ENCODE measurements at regions of chr11 and their contacts with region 1.

Region 1: DNA sequence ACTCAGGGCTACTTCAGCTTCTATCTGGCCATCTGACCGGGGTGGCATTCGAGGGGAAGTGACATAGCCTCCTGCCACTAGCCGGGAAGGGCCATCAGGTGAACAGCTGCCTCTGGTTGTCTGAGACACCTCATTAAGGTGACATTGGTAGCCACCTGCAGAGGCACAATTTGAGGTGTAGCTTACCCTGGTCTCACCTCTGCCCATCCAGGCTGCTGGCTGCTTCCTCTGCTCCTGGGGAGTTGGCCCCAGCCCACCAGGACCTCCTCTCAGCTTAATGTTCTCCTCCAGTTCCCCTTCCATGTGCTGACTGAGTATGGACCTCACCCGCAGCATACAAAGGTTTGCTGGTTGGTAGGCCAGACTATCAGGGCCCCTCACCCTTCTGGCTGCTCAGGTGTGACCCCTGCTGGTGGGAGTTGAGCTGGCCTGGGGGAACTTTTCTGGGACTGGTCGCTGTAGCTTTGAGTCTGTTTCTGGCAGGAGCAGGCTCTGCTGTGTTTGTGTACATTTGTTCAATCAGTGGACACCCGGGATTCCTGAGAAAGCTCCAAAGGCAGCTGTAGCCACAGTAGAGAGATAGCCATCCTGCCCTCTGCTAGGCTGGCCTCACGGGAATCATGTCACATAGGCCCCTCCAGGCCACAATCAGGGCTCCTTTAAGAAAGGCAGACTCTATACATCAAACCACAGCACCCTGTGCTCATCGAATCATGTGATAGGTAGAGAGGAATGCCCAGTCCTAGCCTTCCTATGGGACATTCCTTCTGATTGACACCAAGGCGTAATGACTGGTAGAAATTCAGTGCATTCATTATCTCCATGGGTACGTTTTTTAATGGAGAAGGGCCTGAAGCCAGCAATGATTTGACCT is 295.1 kb upstream of the PLET1 start:
- DNase-seq: peak; percentile 89
- H3K4me3 ChIP-seq: no peak overlapping the region
- H3K27ac ChIP-seq: no peak overlapping the region
- H3K4me1 ChIP-seq: peaks cover 22% of the 10 kb centered on the region
- H3K27me3 ChIP-seq: no peaks in the 10 kb centered on the region
- CTCF ChIP-seq: peak; percentile 97

Region 2: DNA sequence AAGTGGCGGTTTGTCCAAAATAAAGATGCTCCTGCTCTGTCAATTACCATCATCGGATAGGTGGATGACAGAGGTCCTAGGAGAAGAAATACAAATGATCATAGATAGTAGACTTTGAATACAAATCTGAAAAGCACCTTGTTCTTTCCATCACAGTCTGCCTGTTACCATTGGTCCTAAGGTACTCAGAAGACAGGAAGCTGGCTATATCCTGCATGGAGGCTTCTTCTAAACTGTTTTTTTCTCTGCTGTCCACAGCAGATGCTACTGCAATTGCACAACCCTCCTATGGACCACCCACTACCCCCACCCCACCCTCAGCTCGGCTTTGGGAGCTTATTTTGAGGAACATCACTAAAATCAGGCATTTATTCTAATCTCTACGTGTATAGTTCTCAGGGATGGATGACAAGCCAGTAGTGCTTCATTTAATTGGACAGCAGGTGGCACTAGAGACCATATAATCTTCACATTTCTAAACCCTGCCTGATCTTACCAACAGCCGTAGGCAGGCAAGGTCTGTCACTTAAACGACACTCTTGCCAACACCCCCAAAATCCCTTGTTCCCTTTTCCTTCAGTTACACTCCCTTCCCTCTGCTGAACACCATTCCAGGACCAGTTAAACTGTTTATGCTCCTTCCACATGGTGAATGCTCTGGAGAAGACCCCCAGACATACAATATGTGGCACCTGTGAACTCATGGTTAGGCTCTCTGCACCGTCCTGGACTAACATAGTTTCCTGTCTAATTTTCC is 336.1 kb before region 1 on chr11:
- CTCF ChIA-PET with region 1: interaction called, 4 read pairs
- POLR2A ChIA-PET with region 1: no interaction called
- intact Hi-C with region 1: loop called (anchors 10 kb)
- DNase-seq: peak; percentile 90
- H3K4me3 ChIP-seq: no peak overlapping the region
- H3K27ac ChIP-seq: no peak overlapping the region
- H3K4me1 ChIP-seq: peaks cover 27% of the 10 kb centered on the region
- H3K27me3 ChIP-seq: no peaks in the 10 kb centered on the region
- CTCF ChIP-seq: peak; percentile 90

Measured in A673 (cell line).